OCI-LY7 (cell line): ENCODE measurements at regions of chr2 and their contacts with region 1.

Region 1: GRCh38 chr2:23926750-23927571 is at the start of gene ATAD2B:
- DNase-seq: peak; percentile 96
- H3K4me3 ChIP-seq: peak within 1 kb of the TSS; percentile 89
- H3K27ac ChIP-seq: peak within 1 kb of the TSS; percentile 76
- H3K4me1 ChIP-seq: peaks cover 37% of the 10 kb centered on the region
- CTCF ChIP-seq: peak; percentile 80
- total RNA-seq, gene ATAD2B: 7.8 and 9.4 TPM in 2 replicates

Region 2: DNA sequence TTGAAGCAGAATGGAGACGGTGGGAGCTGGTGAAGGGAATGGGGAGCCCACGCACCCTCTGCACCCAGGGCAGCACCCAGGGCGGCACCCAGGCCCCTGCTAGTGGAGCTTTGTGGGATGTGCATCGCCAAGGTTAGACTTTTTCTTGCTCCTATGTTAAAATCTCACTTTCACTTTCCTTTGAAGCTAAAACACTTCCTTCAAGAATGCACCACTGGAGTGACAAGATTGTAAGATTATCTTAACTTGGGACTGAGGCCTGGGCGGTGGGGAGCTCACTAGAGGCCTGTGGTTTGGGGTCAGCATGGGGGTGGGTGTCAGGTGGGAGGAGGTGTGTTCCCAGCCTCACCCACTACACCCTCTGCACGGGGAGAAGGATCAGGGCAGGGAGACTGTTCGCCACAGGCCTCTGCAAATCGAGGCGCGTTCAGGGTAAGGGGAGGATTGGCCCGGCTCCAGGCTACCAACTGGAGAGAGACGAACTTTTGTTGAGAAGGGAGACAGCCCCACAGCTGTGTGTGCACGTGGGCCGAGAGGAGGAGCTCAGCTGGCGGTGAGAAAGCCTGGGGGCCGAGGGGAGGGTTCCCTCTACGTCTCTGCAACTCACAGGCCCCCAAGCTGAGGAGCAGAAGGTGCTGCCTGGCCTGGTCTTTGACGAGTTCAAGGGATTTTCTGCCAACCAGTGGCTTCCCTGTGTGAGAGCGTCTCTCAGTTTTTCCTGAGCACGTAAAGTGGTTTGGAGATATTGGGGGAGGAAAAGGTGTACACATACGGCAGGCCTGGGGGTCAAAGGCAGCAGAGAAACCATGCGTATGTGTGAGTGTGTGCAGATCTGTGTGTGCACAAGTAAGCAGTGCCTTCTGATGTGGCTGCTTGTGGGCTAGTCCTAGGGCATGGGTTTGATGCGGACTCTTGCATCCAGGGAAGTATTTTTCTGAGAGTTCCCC is 394.3 kb before region 1 on chr2:
- CTCF ChIA-PET with region 1: no interaction called
- POLR2A ChIA-PET with region 1: no interaction called
- intact Hi-C with region 1: no loop called
- DNase-seq: no peak
- H3K4me3 ChIP-seq: no peak overlapping the region
- H3K27ac ChIP-seq: no peak overlapping the region
- H3K4me1 ChIP-seq: no peaks in the 10 kb centered on the region
- CTCF ChIP-seq: no peak

Region 3: DNA sequence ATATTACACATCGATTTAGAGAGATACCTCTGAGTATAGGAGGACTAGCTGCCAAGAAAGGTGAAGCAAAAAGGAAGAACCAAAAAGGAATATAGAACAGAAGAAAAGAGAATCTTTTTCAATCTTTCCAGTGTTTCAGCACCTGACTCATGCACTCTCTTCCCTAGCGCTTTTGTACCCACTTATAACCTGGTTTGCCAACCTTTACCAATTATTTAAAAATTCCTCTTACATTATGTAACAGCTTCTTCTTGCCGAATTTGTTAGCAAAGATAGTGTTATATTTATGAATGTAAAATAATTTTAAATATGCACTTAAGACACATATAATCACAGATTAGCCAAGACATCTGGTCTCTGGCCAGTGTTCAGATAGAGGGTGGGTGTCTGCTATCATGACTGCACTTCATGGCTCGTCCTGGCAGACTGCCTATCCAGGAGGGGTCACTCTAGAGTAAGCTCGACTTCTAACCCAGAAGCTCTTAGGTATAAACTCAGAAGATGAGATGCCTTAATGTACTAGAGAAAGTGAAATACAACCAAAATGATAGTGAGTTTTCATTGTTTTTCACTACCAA is 122.9 kb before region 1 on chr2:
- CTCF ChIA-PET with region 1: no interaction called
- POLR2A ChIA-PET with region 1: interaction called, 10 read pairs
- intact Hi-C with region 1: no loop called
- DNase-seq: peak; percentile 31
- H3K4me3 ChIP-seq: no peak overlapping the region
- H3K27ac ChIP-seq: no peak overlapping the region
- H3K4me1 ChIP-seq: no peaks in the 10 kb centered on the region
- CTCF ChIP-seq: peak; percentile 75

Region 4: GRCh38 chr2:23861952-23862351 is 65.0 kb before region 1 on chr2:
- CTCF ChIA-PET with region 1: no interaction called
- POLR2A ChIA-PET with region 1: interaction called, 6 read pairs
- intact Hi-C with region 1: loop called (anchors 2 kb)
- DNase-seq: peak; percentile 63
- H3K4me3 ChIP-seq: no peak overlapping the region
- H3K27ac ChIP-seq: no peak overlapping the region
- H3K4me1 ChIP-seq: peaks cover 22% of the 10 kb centered on the region
- CTCF ChIP-seq: no peak

Region 5: DNA sequence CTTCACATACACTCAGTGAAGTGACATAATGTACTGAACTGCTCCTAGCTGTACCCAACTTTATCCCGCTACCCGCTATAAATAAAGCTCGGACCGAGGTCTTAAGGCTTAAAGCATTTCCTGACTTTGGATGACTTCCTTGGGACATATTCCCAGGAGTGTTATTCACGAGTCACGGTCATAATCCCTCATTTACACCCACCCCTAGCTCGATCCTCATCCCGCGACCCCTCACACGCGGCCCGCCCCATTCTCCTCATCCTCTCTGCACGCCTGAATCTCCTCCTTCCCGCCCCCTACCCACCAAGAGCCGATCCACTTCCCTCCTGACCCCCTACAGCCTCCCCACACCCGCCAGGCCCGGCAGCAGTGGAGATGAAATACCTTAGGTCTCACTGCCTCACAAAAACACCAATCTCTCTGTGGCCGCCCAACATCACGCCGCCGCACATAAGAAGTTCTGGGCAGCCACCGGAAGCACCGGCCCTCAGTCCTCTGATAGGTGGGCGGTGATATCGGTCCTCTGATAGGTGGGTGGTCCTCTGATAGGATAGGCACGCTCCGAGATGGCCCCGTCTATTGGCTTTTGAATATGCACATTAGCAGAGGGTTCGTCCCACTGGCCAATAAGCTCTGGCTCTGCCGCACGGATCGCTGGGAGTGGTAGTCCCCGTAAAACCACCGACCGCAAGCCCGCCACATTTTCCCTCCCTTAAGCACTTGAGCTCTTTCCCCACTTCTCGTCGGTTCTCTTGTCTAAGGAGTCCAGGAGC is 120.2 kb after region 1 on chr2 and contains the start of gene WDCP:
- CTCF ChIA-PET with region 1: interaction called, 3 read pairs
- POLR2A ChIA-PET with region 1: interaction called, 9 read pairs
- intact Hi-C with region 1: loop called (anchors 5 kb)
- DNase-seq: peak; percentile 98
- H3K4me3 ChIP-seq: peak within 1 kb of the TSS; percentile 85
- H3K27ac ChIP-seq: peak within 1 kb of the TSS; percentile 25
- H3K4me1 ChIP-seq: peaks cover 24% of the 10 kb centered on the region
- CTCF ChIP-seq: no peak
- total RNA-seq, gene WDCP: 10.9 and 13.9 TPM in 2 replicates

Region 6: GRCh38 chr2:24075915-24076848 is 149.2 kb after region 1 on chr2 and contains the start of gene SF3B6:
- CTCF ChIA-PET with region 1: interaction called, 4 read pairs
- POLR2A ChIA-PET with region 1: interaction called, 10 read pairs
- intact Hi-C with region 1: loop called (anchors 2 kb)
- DNase-seq: peak; percentile 99
- H3K4me3 ChIP-seq: peak within 1 kb of the TSS; percentile 80
- H3K27ac ChIP-seq: peak within 1 kb of the TSS; percentile 54
- H3K4me1 ChIP-seq: peaks cover 19% of the 10 kb centered on the region
- CTCF ChIP-seq: no peak
- total RNA-seq, gene SF3B6: 136 and 143 TPM in 2 replicates

Region 7: GRCh38 chr2:24164125-24164973 is 237.4 kb after region 1 on chr2:
- CTCF ChIA-PET with region 1: no interaction called
- POLR2A ChIA-PET with region 1: no interaction called
- intact Hi-C with region 1: loop called (anchors 1 kb)
- DNase-seq: peak; percentile 67
- H3K4me3 ChIP-seq: no peak overlapping the region
- H3K27ac ChIP-seq: no peak overlapping the region
- H3K4me1 ChIP-seq: no peaks in the 10 kb centered on the region
- CTCF ChIP-seq: peak; percentile 99